ENCODE measurements at regions of chr1 and their contacts with region 1.

Region 1: DNA sequence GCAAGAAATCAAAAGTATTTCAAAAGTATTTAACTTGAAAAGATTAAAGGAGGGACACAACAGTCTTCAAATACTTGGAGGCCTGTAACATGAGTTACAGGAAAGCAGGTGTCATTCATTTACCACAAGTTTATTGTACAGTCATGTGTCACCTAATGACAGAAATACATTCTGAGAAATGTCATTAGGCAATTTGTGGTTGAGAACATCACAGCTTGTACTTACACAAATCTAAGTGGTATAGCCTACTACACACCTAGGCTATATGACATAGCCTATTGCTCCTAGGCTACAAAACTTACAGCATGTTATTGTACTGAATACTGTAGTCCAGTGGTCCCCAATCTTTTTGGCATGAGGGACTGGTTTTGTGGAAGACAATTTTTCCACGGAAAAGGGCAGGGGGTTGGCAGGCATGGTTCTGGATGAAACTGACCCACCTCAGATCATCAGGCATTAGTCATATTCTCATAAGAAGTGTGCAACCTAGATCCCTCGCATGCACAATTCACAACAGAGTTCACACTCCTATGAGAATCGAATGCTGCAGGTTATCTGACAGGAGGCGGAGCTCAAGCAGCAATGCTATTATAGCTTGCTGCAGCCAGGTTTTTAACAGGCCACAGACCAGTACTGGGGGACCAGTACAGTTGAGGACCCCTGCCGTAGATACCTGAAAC is 25.0 kb upstream of the PHTF1 start:
- DNase-seq: no peak
- H3K4me3 ChIP-seq: no peak overlapping the region
- H3K27ac ChIP-seq: peak overlapping the region; percentile 32
- H3K4me1 ChIP-seq: peaks cover 33% of the 10 kb centered on the region
- CTCF ChIP-seq: no peak

Region 2: DNA sequence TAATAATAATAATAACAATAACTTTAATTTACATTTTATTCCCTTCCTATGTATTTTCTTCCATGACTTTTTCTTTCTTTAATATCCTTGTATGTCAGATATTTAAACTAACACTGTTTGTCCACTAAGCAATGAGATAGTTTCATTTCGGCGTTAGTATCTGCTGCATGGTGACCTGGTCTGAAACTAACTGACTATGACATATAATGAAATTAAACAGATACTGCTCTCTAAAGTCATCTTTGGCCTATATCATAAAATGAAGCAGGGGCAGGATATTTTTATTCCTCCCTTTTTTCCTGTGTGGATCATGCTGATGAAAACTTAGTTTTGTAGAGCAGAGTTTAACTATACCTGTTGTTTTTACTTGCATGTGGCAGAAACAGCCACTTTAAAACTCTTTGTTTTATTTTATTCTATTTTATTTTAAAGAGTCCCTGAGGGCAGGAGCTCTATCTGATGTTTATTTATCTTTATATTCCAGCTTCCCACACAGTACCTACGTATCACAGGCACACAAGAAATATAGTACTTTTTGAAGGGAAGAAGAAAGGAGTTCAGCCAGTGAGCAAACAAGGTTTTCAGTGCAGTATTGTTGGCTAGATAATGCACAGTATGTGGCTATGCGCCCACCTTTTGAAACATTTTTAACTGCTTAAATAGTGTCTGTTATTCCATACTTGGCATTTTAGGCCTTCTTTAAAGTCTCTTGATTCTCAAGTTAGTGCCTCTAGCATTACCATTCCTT is 190.5 kb before region 1 on chr1:
- CTCF ChIA-PET with region 1: no interaction called
- POLR2A ChIA-PET with region 1: no interaction called
- intact Hi-C with region 1: no loop called
- DNase-seq: no peak
- H3K4me3 ChIP-seq: no peak overlapping the region
- H3K27ac ChIP-seq: no peak overlapping the region
- H3K4me1 ChIP-seq: no peaks in the 10 kb centered on the region
- CTCF ChIP-seq: no peak

Region 3: GRCh38 chr1:113804421-113805255 is 20.4 kb after region 1 on chr1:
- CTCF ChIA-PET with region 1: no interaction called
- POLR2A ChIA-PET with region 1: interaction called, 12 read pairs
- intact Hi-C with region 1: no loop called
- DNase-seq: no peak
- H3K4me3 ChIP-seq: no peak overlapping the region
- H3K27ac ChIP-seq: no peak overlapping the region
- H3K4me1 ChIP-seq: peaks cover 14% of the 10 kb centered on the region
- CTCF ChIP-seq: no peak